ENCODE measurements at regions of chr18 and their contacts with region 1.

Region 1: DNA sequence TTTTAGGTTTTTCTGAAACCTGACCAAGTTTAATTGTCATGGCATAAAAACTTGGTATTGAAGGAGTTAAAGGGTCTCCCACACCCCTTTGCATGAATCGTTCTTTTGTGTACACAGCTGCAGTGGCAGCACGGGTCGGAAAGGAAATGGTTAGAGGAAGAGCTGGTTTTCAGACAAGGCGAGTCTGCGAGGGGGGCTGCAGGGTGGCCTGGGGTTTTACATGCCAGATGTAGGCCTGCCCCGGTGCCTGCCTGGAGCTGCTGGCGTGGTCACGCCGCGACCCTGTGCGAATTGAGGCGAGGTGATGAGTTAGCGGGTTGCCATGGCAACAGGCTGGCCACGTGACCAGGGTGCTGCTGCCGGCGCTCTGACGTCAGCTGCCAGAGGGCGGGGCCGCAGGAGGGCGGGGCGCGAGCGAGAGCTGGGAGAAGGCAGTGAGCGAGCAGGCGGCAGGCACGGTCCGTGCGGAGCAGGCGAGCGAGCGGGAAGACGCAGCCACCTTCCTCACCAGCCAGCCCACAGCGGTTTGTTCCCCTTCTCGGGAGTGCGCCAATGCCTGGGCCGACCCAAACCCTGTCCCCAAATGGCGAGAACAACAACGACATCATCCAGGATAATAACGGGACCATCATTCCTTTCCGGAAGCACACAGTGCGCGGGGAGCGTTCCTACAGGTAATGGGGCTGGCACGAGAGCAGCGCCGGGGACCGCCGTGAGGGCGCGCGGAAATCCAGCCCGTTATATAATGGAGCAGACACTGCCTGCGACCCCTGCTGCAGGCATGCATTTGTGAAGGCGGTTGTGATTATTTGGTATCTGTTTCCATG is at the start of gene MAPRE2:
- DNase-seq: peak; percentile 99 to 100 (median 100)
- H3K4me3 ChIP-seq: peak within 1 kb of the TSS; percentile 98
- H3K4me3 Mint-ChIP-seq: peak within 1 kb of the TSS; percentile 93 to 99 (median 97)
- H3K27ac ChIP-seq: peak within 1 kb of the TSS; percentile 98
- H3K27ac Mint-ChIP-seq: peak within 1 kb of the TSS; percentile 94 to 99 (median 97)
- H3K4me1 ChIP-seq: peaks cover 44% of the 10 kb centered on the region
- H3K4me1 Mint-ChIP-seq: peaks cover 50 to 70% (median 56%) of the 10 kb centered on the region in 3 donors
- H3K27me3 ChIP-seq: no peaks in the 10 kb centered on the region
- H3K27me3 Mint-ChIP-seq: peaks cover 0 to 4% of the 10 kb centered on the region in 2 donors
- total RNA-seq, gene MAPRE2: 38.5 to 38.6 TPM

Region 2: GRCh38 chr18:34871435-34871834 is 169.8 kb before region 1 on chr18:
- CTCF ChIA-PET with region 1: no interaction called
- POLR2A ChIA-PET with region 1: no interaction called
- DNase-seq: no peak
- H3K4me3 ChIP-seq: no peak overlapping the region
- H3K4me3 Mint-ChIP-seq: no peak overlapping the region
- H3K27ac ChIP-seq: no peak overlapping the region
- H3K27ac Mint-ChIP-seq: no peak overlapping the region
- H3K4me1 ChIP-seq: no peaks in the 10 kb centered on the region
- H3K4me1 Mint-ChIP-seq: peaks cover 0 to 3% (median 3%) of the 10 kb centered on the region in 3 donors
- H3K27me3 ChIP-seq: no peaks in the 10 kb centered on the region
- H3K27me3 Mint-ChIP-seq: no peaks in the 10 kb centered on the region

Region 3: DNA sequence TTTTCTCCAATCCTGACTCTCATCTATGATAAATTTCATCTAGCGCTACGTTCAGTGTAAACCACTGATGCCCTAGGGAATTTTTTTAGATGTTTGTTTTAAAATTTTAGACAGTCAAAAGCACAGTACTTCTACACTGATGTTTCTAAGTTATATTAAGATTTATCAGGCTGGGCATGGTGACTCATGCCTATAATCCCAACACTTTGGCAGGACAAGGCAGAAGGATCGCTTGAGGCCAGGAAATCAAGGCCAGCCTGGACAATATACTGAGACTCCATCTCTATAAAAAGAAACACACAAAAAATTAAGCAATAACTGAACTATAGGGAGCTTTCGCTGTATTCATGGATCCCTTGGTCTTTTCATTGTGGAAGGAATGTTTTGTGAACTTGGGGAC is 50.6 kb before region 1 on chr18:
- CTCF ChIA-PET with region 1: no interaction called
- POLR2A ChIA-PET with region 1: no interaction called
- DNase-seq: no peak
- H3K4me3 ChIP-seq: no peak overlapping the region
- H3K4me3 Mint-ChIP-seq: no peak overlapping the region
- H3K27ac ChIP-seq: no peak overlapping the region
- H3K27ac Mint-ChIP-seq: no peak overlapping the region
- H3K4me1 ChIP-seq: no peaks in the 10 kb centered on the region
- H3K4me1 Mint-ChIP-seq: peaks cover 0 to 5% (median 3%) of the 10 kb centered on the region in 3 donors
- H3K27me3 ChIP-seq: no peaks in the 10 kb centered on the region
- H3K27me3 Mint-ChIP-seq: peaks cover 0 to 2% of the 10 kb centered on the region in 2 donors

Region 4: GRCh38 chr18:35029770-35030169 is 11.4 kb before region 1 on chr18:
- CTCF ChIA-PET with region 1: interaction called, 60 read pairs
- POLR2A ChIA-PET with region 1: interaction called, 52 read pairs
- DNase-seq: peak in 2 of 5 donors; percentile 54 to 56
- H3K4me3 ChIP-seq: peak overlapping the region; percentile 65
- H3K4me3 Mint-ChIP-seq: peak overlapping the region; percentile 82 to 94 (median 86)
- H3K27ac ChIP-seq: peak overlapping the region; percentile 91
- H3K27ac Mint-ChIP-seq: peak overlapping the region; percentile 86 to 100 (median 98)
- H3K4me1 ChIP-seq: peaks cover 57% of the 10 kb centered on the region
- H3K4me1 Mint-ChIP-seq: peaks cover 44 to 56% (median 54%) of the 10 kb centered on the region in 3 donors
- H3K27me3 ChIP-seq: no peaks in the 10 kb centered on the region
- H3K27me3 Mint-ChIP-seq: no peaks in the 10 kb centered on the region

Region 5: DNA sequence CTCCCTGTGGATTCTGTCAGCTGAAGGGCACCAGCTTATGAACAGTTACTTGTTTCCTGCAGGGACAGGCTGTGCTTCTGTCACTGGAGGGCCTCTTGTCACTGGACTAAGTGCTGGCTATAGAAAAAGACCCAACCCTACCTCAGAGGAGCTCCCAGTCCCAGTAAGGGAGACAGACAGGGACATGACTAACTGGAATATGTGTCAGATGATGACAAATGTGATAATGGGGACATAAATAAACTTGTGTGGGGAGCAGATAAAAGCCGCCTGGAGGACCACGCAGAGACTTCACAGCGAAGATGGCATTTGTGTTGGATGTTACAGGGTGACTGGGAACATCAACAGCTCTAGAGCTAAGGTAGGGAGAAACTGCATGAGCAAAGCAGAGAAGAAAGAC is 95.0 kb after region 1 on chr18:
- CTCF ChIA-PET with region 1: no interaction called
- POLR2A ChIA-PET with region 1: no interaction called
- DNase-seq: no peak
- H3K4me3 ChIP-seq: no peak overlapping the region
- H3K4me3 Mint-ChIP-seq: no peak overlapping the region
- H3K27ac ChIP-seq: peak overlapping the region; percentile 18
- H3K27ac Mint-ChIP-seq: peak overlapping the region in 4 of 8 donors; percentile 1 to 66 (median 41)
- H3K4me1 ChIP-seq: no peaks in the 10 kb centered on the region
- H3K4me1 Mint-ChIP-seq: no peaks in the 10 kb centered on the region
- H3K27me3 ChIP-seq: no peaks in the 10 kb centered on the region
- H3K27me3 Mint-ChIP-seq: peaks cover 0 to 2% of the 10 kb centered on the region in 2 donors